H1 (cell line): ENCODE measurements at regions of chr17 and their contacts with region 1.

Region 1: DNA sequence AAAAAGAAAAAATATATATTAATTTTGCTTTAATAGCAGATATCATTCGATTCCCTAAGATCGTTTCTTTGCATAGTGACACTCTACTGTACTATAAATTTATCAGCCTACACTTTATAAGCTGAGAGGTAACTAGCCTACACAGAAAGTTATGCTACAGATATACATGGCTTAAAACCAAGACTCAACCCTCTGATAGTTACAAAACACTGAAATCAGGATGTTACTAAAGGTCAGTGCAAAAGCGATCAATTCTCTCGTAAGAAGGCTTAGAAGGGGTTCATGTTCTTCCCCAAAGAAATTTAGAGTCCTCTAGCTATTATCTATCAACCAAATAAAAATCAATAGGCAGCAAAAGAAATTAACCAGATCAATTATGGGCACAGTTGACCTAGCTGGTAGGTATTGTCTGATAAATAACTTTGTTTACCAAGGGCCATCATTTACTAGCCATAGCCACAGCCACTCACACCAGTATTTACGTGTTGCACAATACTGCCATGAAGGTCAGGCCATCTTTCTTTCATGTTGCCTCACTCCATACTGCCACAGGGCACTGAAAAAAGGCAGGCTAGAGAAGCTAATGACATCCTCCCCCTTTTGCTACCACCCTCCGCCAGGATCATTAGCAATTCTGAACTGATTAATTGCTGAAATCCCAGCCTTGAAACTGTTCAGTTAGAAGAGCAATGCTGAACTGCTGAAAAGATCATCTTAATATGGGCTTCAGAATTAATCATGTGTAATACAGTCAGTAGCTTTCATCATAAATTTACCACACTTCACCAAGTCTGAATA is 43.7 kb downstream of the RND2 start:
- DNase-seq: no peak
- H3K4me3 ChIP-seq: no peak overlapping the region
- H3K27ac ChIP-seq: no peak overlapping the region
- H3K4me1 ChIP-seq: peaks cover 0 to 5% (median 0%) of the 10 kb centered on the region in 4 experiments; a peak in 2 of 7 replicates
- H3K27me3 ChIP-seq: no peaks in the 10 kb centered on the region
- CTCF ChIP-seq: no peak
- EP300 ChIP-seq: no peak
- POLR2A ChIP-seq: no peak
- RAD21 ChIP-seq: no peak

Region 2: GRCh38 chr17:42667123-42667951 is 401.4 kb before region 1 on chr17:
- CTCF ChIA-PET with region 1: no interaction called
- POLR2A ChIA-PET with region 1: no interaction called
- DNase-seq: no peak
- H3K4me3 ChIP-seq: no peak overlapping the region
- H3K27ac ChIP-seq: no peak overlapping the region
- H3K4me1 ChIP-seq: peaks cover 0 to 26% (median 19%) of the 10 kb centered on the region in 4 experiments; a peak in 6 of 7 replicates
- H3K27me3 ChIP-seq: peaks cover 2 to 16% (median 12%) of the 10 kb centered on the region in 4 experiments; a peak in 6 of 7 replicates
- CTCF ChIP-seq: no peak
- EP300 ChIP-seq: no peak
- POLR2A ChIP-seq: no peak; a peak in 1 of 3 replicates
- RAD21 ChIP-seq: no peak

Region 3: DNA sequence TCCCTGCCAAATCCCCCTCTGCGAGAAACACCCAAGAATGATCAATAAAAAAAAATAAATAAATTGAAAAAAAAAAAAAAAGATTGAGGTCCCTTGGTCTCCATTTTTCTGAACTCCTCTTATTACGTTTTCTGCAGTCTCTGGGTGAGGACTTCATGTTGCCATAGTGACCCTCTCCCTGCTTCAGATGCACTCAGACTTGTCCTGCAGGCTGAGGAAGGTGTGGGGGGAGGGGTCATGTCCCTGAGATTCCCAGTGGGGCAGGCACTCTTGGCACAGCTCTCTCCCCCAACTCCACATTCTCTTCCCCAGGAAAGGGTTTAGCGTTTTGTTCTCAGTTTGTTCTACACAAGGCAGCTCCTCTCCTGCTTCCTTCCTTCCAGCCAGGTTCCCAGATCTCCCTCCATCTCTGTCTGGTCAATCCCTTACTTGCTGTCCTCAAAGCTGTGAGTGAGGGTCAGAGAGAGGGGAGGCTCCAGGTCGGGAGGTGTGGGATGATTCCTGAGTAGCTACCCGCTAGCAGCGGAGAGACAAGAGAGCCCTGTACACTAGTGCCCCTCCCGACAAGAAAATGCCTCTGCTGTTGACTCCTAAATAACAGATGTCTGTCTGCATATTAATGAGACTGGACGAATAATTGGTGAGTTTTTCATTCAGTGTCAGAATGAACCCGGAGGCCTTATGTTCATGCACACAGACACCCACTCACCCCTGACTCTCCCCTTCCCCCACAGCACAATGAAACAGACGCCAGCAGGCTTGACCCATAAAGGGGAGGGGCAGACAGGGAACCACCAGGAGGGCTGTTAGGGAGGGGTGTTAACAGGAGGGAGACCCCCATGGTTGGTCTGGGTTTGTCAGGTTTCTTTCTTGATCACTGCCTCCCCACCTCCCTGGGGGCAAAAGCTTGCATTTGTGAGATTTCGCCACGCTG is 34.6 kb before region 1 on chr17:
- CTCF ChIA-PET with region 1: no interaction called
- POLR2A ChIA-PET with region 1: interaction called, 12 read pairs
- DNase-seq: no peak
- H3K4me3 ChIP-seq: peak overlapping the region in 3 of 4 experiments; percentile 6 to 48 (median 14); a peak in 4 of 8 replicates
- H3K27ac ChIP-seq: peak overlapping the region; percentile 64
- H3K4me1 ChIP-seq: peaks cover 14 to 30% (median 25%) of the 10 kb centered on the region in 4 experiments
- H3K27me3 ChIP-seq: no peaks in the 10 kb centered on the region
- CTCF ChIP-seq: no peak
- EP300 ChIP-seq: no peak
- POLR2A ChIP-seq: no peak
- RAD21 ChIP-seq: no peak

Region 4: DNA sequence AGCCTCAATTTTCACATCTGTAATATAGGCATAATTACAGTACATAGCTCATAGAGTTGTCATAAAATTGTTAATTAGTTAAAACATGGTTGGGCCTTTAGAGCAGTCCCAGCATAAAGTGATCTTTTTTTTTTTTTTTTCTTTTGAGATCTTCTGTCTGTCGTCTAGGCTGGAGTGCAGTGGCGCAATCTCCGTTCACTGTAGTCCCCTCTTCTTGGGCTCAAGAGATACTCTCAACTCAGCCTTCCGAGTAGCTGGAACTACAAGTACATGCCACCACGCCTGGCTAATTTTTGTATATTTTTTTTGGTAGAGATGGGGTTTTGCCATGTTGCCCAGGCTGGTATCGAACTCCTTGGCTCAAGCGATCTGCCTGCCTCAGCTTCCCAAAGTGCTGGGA is 12.7 kb before region 1 on chr17:
- CTCF ChIA-PET with region 1: interaction called, 10 read pairs
- POLR2A ChIA-PET with region 1: interaction called, 4 read pairs
- DNase-seq: no peak
- H3K4me3 ChIP-seq: no peak overlapping the region
- H3K27ac ChIP-seq: no peak overlapping the region
- H3K4me1 ChIP-seq: no peaks in the 10 kb centered on the region
- H3K27me3 ChIP-seq: no peaks in the 10 kb centered on the region
- CTCF ChIP-seq: no peak
- EP300 ChIP-seq: no peak
- POLR2A ChIP-seq: no peak
- RAD21 ChIP-seq: no peak

Region 5: DNA sequence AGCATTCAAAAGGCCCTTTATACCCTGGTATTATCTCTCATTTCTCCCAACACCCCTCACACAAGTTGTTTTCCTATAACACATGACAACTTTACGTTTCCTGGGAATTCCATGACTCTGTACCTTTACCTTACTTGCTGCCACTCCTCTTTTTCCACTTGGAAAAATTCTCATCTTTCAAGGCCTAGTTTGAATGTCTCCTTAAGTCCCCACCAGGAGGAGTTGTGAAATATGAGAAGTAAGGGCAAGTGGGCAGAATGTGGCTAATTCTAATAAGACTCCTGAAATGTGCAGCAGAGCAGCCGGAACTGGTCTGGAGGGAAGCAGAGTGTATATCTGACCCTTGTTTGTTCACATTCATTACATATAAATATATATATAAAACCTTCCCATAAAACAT is 16.7 kb after region 1 on chr17:
- CTCF ChIA-PET with region 1: interaction called, 12 read pairs
- POLR2A ChIA-PET with region 1: interaction called, 5 read pairs
- DNase-seq: no peak
- H3K4me3 ChIP-seq: no peak overlapping the region
- H3K27ac ChIP-seq: no peak overlapping the region
- H3K4me1 ChIP-seq: no peaks in the 10 kb centered on the region; a peak in 1 of 7 replicates
- H3K27me3 ChIP-seq: no peaks in the 10 kb centered on the region
- CTCF ChIP-seq: no peak
- EP300 ChIP-seq: no peak
- POLR2A ChIP-seq: no peak
- RAD21 ChIP-seq: no peak

Region 6: GRCh38 chr17:43106552-43106951 is 37.8 kb after region 1 on chr17:
- CTCF ChIA-PET with region 1: no interaction called
- POLR2A ChIA-PET with region 1: no interaction called
- DNase-seq: no peak
- H3K4me3 ChIP-seq: no peak overlapping the region
- H3K27ac ChIP-seq: no peak overlapping the region
- H3K4me1 ChIP-seq: no peaks in the 10 kb centered on the region
- H3K27me3 ChIP-seq: no peaks in the 10 kb centered on the region
- CTCF ChIP-seq: no peak
- EP300 ChIP-seq: no peak
- POLR2A ChIP-seq: no peak
- RAD21 ChIP-seq: no peak